Activated CD8-positive, alpha-beta T cell treated with anti-CD3 and anti-CD28 coated beads, Interleukin-2, amount 10 ng/mL, durations not matched to agents 7 days and 5 days (primary cell): ENCODE measurements at regions of chr16 and their contacts with region 1.

Region 1: DNA sequence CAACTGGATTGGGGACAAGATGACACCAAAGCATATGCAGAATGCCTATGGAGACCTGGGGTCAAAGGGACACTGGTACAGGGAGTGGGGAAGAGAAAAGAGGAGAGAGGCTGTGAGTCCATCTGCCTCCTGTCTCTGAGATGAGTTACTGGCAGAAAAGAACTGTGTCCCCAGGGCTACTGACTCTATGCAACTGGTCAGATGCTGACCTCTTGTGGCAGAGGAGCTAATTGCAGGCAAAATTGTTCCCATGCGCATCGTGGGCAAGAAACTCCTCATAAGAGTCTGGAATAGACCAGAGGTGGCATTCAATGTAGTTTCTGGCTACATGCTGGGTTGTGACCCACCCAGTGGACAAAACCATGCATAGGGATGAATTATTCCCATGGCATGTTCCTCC is 26.1 kb upstream of the MLKL start:
- DNase-seq: peak; percentile 45
- ATAC-seq: no peak
- H3K4me3 Mint-ChIP-seq: no peak overlapping the region
- H3K27ac Mint-ChIP-seq: no peak overlapping the region
- H3K4me1 Mint-ChIP-seq: peaks cover 13% of the 10 kb centered on the region
- H3K27me3 Mint-ChIP-seq: no peaks in the 10 kb centered on the region

Region 2: DNA sequence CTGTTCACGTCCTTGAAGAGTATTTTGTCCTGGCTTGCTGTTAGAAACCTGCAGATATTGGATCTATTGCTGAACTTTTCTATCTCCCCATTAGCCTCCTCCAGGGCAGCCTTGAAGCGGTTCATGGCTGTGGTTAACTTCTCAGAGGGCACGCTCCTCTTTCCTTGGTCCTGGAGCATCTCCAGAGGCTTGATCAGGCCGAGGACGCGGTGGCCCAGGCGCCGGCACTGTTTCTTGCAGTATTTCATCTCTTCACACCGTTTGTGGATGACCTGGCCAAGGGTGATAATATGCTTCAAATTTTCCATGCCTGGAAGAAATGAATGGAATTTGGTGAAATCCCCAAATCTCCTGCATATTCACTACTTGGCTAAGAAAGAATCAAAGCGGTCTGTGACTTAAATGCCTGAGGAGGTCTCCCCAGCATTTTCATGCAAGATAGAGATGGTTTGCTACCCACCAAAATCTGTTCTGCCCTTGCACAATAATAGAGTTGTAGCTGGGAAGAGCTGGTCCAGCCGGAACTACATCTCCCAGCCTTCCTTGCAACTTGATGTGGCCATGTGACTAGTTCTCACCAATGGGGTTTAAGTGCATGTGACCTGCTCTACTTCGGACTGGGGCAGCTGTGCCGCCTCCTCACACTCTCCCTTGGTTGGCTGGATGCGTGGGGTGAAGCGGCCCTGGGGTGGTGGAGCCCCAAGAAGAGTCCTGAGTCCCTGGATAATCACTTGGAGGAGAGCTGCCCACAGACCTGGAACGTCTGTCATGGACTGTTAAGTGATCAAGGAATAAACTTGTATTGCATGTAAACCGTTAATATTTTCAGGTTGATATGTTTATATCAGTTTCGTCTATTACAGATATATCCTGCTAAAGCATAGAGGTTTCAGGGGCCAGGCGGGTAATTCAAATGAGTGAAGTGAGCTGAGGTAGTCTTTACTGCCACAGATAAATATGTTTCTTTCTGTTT is 31.0 kb before region 1 on chr16:
- CTCF ChIA-PET with region 1: interaction called, 11 read pairs
- POLR2A ChIA-PET with region 1: no interaction called
- DNase-seq: peak; percentile 79
- ATAC-seq: peak; percentile 74
- H3K4me3 Mint-ChIP-seq: peak overlapping the region; percentile 74
- H3K27ac Mint-ChIP-seq: peak overlapping the region; percentile 60
- H3K4me1 Mint-ChIP-seq: peaks cover 46% of the 10 kb centered on the region
- H3K27me3 Mint-ChIP-seq: no peaks in the 10 kb centered on the region

Region 3: DNA sequence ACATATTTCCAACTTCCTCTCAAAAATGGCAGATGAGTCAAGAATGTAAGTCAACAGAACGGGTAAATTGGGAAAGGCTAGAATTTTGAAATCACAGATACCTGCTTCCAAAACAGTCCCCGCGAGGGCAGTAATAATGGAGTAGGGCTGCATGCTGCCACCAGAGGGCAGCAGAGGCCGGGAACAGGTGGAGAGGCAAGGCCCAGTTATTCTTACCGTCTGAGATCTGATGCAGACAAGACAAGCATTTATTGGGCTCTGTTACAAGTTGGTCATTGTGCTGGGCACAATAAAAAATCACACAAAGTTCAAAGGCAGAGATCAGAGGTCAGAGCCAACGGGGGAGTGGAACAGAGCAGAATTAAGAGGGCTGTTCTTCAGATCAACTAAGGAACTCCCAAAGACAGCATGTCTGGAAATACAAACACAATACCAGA is 17.3 kb before region 1 on chr16:
- CTCF ChIA-PET with region 1: interaction called, 11 read pairs
- POLR2A ChIA-PET with region 1: no interaction called
- DNase-seq: peak; percentile 87
- ATAC-seq: peak; percentile 96
- H3K4me3 Mint-ChIP-seq: no peak overlapping the region
- H3K27ac Mint-ChIP-seq: no peak overlapping the region
- H3K4me1 Mint-ChIP-seq: peaks cover 7% of the 10 kb centered on the region
- H3K27me3 Mint-ChIP-seq: peaks cover 6% of the 10 kb centered on the region

Region 4: GRCh38 chr16:74749291-74750055 is 22.8 kb after region 1 on chr16:
- CTCF ChIA-PET with region 1: no interaction called
- POLR2A ChIA-PET with region 1: no interaction called
- DNase-seq: no peak
- ATAC-seq: no peak
- H3K4me3 Mint-ChIP-seq: no peak overlapping the region
- H3K27ac Mint-ChIP-seq: no peak overlapping the region
- H3K4me1 Mint-ChIP-seq: no peaks in the 10 kb centered on the region
- H3K27me3 Mint-ChIP-seq: no peaks in the 10 kb centered on the region

Region 5: GRCh38 chr16:74760007-74760767 is 33.5 kb after region 1 on chr16:
- CTCF ChIA-PET with region 1: no interaction called
- POLR2A ChIA-PET with region 1: no interaction called
- DNase-seq: no peak
- ATAC-seq: no peak
- H3K4me3 Mint-ChIP-seq: no peak overlapping the region
- H3K27ac Mint-ChIP-seq: no peak overlapping the region
- H3K4me1 Mint-ChIP-seq: no peaks in the 10 kb centered on the region
- H3K27me3 Mint-ChIP-seq: peaks cover 3% of the 10 kb centered on the region